Caco-2 (cell line): ENCODE measurements at regions of chr11 and their contacts with region 1.

Region 1: DNA sequence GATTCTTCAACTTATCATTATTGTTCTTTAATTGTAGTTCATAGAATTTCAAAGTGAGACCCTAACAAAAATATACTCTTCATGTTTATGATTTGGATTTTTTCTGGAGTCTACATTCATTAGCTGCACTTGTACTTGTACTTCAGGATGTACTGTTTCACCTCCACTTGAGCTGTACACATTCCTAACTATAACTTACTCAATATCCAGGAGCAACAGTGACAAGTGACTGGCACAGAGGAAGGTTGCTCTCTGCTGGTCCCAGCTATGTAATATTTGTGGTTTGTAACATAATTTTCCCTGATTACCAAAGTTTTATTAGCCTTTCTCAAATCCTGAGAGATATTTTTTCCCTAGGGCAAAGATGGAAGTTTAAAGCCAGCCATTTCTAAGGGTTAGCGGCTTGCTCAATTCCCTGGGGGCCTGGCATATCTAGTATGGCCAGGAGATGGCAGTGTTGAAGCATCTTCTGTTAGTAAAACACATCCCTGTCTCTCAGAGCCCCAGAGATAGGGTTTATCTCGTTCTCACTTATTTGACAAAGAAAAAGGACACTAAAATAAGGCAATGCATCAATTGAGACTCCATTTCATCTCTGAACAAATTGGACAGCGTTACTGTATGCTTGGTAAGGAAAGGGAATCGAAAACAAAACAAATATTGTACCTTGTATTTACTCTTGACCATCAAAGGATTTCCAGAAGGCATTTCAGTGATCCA is 14.2 kb downstream of the OR52A5 start:
- DNase-seq: peak; percentile 67 to 78
- H3K4me3 ChIP-seq: no peak overlapping the region
- H3K4me3 Mint-ChIP-seq: no peak overlapping the region
- H3K27ac Mint-ChIP-seq: no peak overlapping the region
- H3K4me1 ChIP-seq: no peaks in the 10 kb centered on the region
- H3K4me1 Mint-ChIP-seq: no peaks in the 10 kb centered on the region
- H3K27me3 ChIP-seq: no peaks in the 10 kb centered on the region
- H3K27me3 Mint-ChIP-seq: peaks cover 8% of the 10 kb centered on the region
- CTCF ChIP-seq: peak; percentile 69 to 87

Region 2: GRCh38 chr11:4626207-4627099 is 497.5 kb before region 1 on chr11:
- CTCF ChIA-PET with region 1: no interaction called
- POLR2A ChIA-PET with region 1: no interaction called
- intact Hi-C with region 1: loop called (anchors 1 kb)
- DNase-seq: peak; percentile 73 to 83
- H3K4me3 ChIP-seq: no peak overlapping the region
- H3K4me3 Mint-ChIP-seq: no peak overlapping the region
- H3K27ac Mint-ChIP-seq: no peak overlapping the region
- H3K4me1 ChIP-seq: no peaks in the 10 kb centered on the region
- H3K4me1 Mint-ChIP-seq: peaks cover 6% of the 10 kb centered on the region
- H3K27me3 ChIP-seq: no peaks in the 10 kb centered on the region; the same call in 1 of the 2 replicates
- H3K27me3 Mint-ChIP-seq: peaks cover 13% of the 10 kb centered on the region
- CTCF ChIP-seq: peak; percentile 73 to 79

Region 3: GRCh38 chr11:5291207-5291838 is 167.4 kb after region 1 on chr11:
- CTCF ChIA-PET with region 1: no interaction called
- POLR2A ChIA-PET with region 1: no interaction called
- intact Hi-C with region 1: loop called (anchors 1 kb)
- DNase-seq: peak in 1 of 2 experiments; percentile 17
- H3K4me3 ChIP-seq: no peak overlapping the region
- H3K4me3 Mint-ChIP-seq: no peak overlapping the region
- H3K27ac Mint-ChIP-seq: no peak overlapping the region
- H3K4me1 ChIP-seq: no peaks in the 10 kb centered on the region
- H3K4me1 Mint-ChIP-seq: no peaks in the 10 kb centered on the region
- H3K27me3 ChIP-seq: no peaks in the 10 kb centered on the region
- H3K27me3 Mint-ChIP-seq: peaks cover 2% of the 10 kb centered on the region
- CTCF ChIP-seq: peak; percentile 55 to 71

Region 4: GRCh38 chr11:5369793-5370192 is 245.8 kb after region 1 on chr11:
- CTCF ChIA-PET with region 1: no interaction called
- POLR2A ChIA-PET with region 1: no interaction called
- intact Hi-C with region 1: loop called (anchors 1 kb)
- DNase-seq: peak in 1 of 2 experiments; percentile 13
- H3K4me3 ChIP-seq: no peak overlapping the region
- H3K4me3 Mint-ChIP-seq: no peak overlapping the region
- H3K27ac Mint-ChIP-seq: no peak overlapping the region
- H3K4me1 ChIP-seq: no peaks in the 10 kb centered on the region
- H3K4me1 Mint-ChIP-seq: no peaks in the 10 kb centered on the region
- H3K27me3 ChIP-seq: no peaks in the 10 kb centered on the region
- H3K27me3 Mint-ChIP-seq: peaks cover 15% of the 10 kb centered on the region
- CTCF ChIP-seq: peak in 1 of 2 experiments; percentile 20

Region 5: GRCh38 chr11:5380740-5381342 is 256.9 kb after region 1 on chr11:
- CTCF ChIA-PET with region 1: no interaction called
- POLR2A ChIA-PET with region 1: no interaction called
- intact Hi-C with region 1: loop called (anchors 1 kb)
- DNase-seq: peak; percentile 71 to 73
- H3K4me3 ChIP-seq: no peak overlapping the region
- H3K4me3 Mint-ChIP-seq: no peak overlapping the region
- H3K27ac Mint-ChIP-seq: no peak overlapping the region
- H3K4me1 ChIP-seq: no peaks in the 10 kb centered on the region
- H3K4me1 Mint-ChIP-seq: no peaks in the 10 kb centered on the region
- H3K27me3 ChIP-seq: no peaks in the 10 kb centered on the region
- H3K27me3 Mint-ChIP-seq: peaks cover 6% of the 10 kb centered on the region
- CTCF ChIP-seq: peak; percentile 78 to 92